Activated CD4-positive, alpha-beta T cell treated with anti-CD3 and anti-CD28 coated beads, Interleukin-2, amount 10 ng/mL, durations not matched to agents 24 days and 14 days (primary cell): ENCODE measurements at regions of chr7 and their contacts with region 1.

Region 1: GRCh38 chr7:37208528-37208927 is 240.1 kb downstream of the ELMO1 start:
- DNase-seq: peak; percentile 83
- H3K4me3 Mint-ChIP-seq: no peak overlapping the region
- H3K27ac Mint-ChIP-seq: no peak overlapping the region
- H3K4me1 Mint-ChIP-seq: peaks cover 15% of the 10 kb centered on the region
- H3K27me3 Mint-ChIP-seq: no peaks in the 10 kb centered on the region

Region 2: DNA sequence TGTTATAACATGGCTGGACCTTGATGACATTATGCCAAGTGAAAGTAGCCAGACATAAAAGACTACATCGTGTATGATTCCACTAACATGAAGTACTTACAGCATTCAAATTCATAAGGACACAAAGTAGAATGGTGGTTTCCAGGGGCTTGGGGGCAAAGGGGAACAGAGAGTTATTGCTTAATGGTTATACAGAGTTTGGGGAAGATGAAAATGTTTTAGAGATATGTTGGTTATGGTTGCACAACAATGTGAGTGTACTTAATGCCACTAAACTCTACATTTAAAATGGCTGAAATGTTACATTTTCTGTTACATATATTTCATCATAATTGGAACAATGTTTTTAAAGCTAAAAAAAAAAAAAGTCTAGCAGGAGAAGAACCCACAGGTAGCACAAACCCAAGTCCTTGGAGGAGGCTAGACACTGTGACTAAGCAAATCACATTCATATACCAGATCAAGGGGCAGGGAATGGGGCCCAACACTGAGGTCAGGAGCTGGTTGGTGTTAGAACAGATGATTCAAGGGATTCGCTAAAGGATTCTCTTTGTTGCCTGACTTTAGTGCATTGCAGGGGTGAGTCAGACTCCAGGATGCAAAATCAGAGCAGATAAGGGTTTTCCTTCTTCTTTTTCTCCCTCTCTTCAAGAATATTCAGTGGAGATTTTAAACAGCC is 459.1 kb before region 1 on chr7:
- intact Hi-C with region 1: no loop called
- DNase-seq: no peak
- H3K4me3 Mint-ChIP-seq: no peak overlapping the region
- H3K27ac Mint-ChIP-seq: no peak overlapping the region
- H3K4me1 Mint-ChIP-seq: peaks cover 25% of the 10 kb centered on the region
- H3K27me3 Mint-ChIP-seq: peaks cover 2% of the 10 kb centered on the region

Region 3: GRCh38 chr7:37181550-37181932 is 27.0 kb before region 1 on chr7:
- intact Hi-C with region 1: no loop called
- DNase-seq: peak; percentile 43
- H3K4me3 Mint-ChIP-seq: no peak overlapping the region
- H3K27ac Mint-ChIP-seq: no peak overlapping the region
- H3K4me1 Mint-ChIP-seq: peaks cover 13% of the 10 kb centered on the region
- H3K27me3 Mint-ChIP-seq: no peaks in the 10 kb centered on the region

Region 4: GRCh38 chr7:37476881-37477450 is 268.4 kb after region 1 on chr7:
- intact Hi-C with region 1: no loop called
- DNase-seq: no peak
- H3K4me3 Mint-ChIP-seq: no peak overlapping the region
- H3K27ac Mint-ChIP-seq: no peak overlapping the region
- H3K4me1 Mint-ChIP-seq: no peaks in the 10 kb centered on the region
- H3K27me3 Mint-ChIP-seq: peaks cover 52% of the 10 kb centered on the region

Region 5: GRCh38 chr7:37510043-37510634 is 301.6 kb after region 1 on chr7:
- intact Hi-C with region 1: loop called (anchors 1 kb)
- DNase-seq: peak; percentile 72
- H3K4me3 Mint-ChIP-seq: no peak overlapping the region
- H3K27ac Mint-ChIP-seq: no peak overlapping the region
- H3K4me1 Mint-ChIP-seq: no peaks in the 10 kb centered on the region
- H3K27me3 Mint-ChIP-seq: peaks cover 28% of the 10 kb centered on the region

Region 6: GRCh38 chr7:37833107-37833817 is 624.7 kb after region 1 on chr7:
- intact Hi-C with region 1: loop called (anchors 2 kb)
- DNase-seq: peak; percentile 77
- H3K4me3 Mint-ChIP-seq: peak overlapping the region; percentile 84
- H3K27ac Mint-ChIP-seq: no peak overlapping the region
- H3K4me1 Mint-ChIP-seq: peaks cover 3% of the 10 kb centered on the region
- H3K27me3 Mint-ChIP-seq: peaks cover 17% of the 10 kb centered on the region